ENCODE measurements at regions of chr4 and their contacts with region 1.

Region 1: GRCh38 chr4:123564758-123565346 is 168.3 kb downstream of the SPRY1 start:
- DNase-seq: peak; percentile 33
- ATAC-seq: peak; percentile 90 to 92

Region 2: DNA sequence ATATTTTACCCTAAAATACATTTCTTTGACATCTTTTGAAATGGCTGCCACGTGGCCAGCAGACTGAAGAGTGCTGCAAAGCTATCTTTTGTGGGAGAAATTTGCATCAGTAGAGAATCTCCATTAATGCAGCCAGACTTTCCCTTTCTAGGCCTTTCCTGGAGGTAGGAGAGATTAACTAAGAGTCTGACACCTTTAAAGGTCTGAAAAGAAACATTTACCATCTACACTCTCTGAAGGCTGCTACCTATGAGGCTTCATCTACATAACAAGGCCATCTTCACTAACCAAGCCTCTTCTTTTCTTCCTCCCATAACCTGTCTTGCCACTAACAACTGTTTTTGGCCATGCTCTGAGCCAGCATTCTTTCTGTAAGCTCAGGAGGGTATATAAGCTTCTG is 186.1 kb before region 1 on chr4:
- intact Hi-C with region 1: no loop called
- DNase-seq: no peak
- ATAC-seq: no peak

Region 3: GRCh38 chr4:123421227-123421936 is 143.5 kb before region 1 on chr4:
- intact Hi-C with region 1: loop called in 1 of 2 experiments (anchors 10 kb)
- DNase-seq: no peak
- ATAC-seq: no peak

Measured in left cardiac atrium (tissue), 4 donors.